Activated T-helper 1 cell treated with anti-CD3 and anti-CD28 coated beads, Interleukin-12 subunit alpha, Interleukin-12 subunit beta, Interleukin-2, Interleukin-4 antibody, amounts not matched to agents 30 ng/mL and 10 ng/mL and 1 ng/mL, durations not matched to agents 14 hours and 24 hours and 36 hours (primary cell): ENCODE measurements at regions of chr5 and their contacts with region 1.

Region 1: DNA sequence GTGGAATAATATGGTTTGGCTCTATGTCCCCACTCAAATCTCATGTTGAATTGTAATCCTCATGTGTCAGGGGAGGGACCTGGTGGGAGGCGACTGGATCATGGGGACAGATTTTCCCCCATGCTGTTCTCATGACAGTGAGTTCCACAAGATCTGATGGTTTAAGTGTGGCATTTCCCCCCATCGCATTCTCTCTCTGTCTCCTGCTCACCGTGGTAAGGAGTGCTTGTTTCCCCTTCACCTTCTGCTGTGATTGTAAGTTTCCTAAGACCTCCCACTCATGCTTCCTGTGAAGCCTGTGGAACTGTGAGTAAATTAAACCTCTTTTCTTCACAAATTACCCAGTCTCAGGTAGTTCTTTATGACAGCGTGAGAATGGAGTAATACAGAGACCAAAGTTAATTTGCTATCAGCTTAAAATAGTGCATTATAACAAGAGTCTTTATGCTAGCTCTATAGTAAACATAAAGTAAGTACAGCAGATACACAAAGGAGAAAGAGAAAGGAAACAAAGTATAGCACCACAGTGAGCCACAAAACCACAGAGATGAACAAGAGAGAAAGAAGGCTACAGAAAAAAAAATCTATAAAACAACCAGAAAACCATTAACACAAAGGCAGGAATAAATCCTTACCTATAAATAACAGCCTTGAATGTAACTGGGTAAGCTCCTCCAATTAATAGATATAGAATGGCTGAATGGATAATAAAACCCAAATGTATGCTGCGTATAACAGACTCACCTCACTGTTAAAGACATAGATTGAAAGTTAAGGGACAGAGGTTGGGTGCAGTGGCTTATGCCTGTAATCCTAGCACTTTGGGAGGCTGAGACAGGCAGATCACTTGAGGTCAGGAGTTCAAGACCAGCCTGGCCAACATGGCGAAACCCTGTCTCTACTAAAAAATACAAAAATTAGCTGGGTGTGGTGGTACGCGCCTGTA is 39.7 kb downstream of the RAPGEF6 start:
- DNase-seq: peak; percentile 19
- H3K4me3 Mint-ChIP-seq: peak overlapping the region; percentile 61
- H3K27ac Mint-ChIP-seq: peak overlapping the region; percentile 82
- H3K4me1 Mint-ChIP-seq: peaks cover 39% of the 10 kb centered on the region
- H3K27me3 Mint-ChIP-seq: no peaks in the 10 kb centered on the region

Region 2: GRCh38 chr5:131563434-131564228 is 31.7 kb before region 1 on chr5:
- intact Hi-C with region 1: no loop called
- DNase-seq: no peak
- H3K4me3 Mint-ChIP-seq: no peak overlapping the region
- H3K27ac Mint-ChIP-seq: no peak overlapping the region
- H3K4me1 Mint-ChIP-seq: peaks cover 34% of the 10 kb centered on the region
- H3K27me3 Mint-ChIP-seq: no peaks in the 10 kb centered on the region

Region 3: GRCh38 chr5:131854134-131854533 is 258.8 kb after region 1 on chr5:
- intact Hi-C with region 1: loop called (anchors 1 kb)
- DNase-seq: peak; percentile 6
- H3K4me3 Mint-ChIP-seq: peak overlapping the region; percentile 24
- H3K27ac Mint-ChIP-seq: peak overlapping the region; percentile 10
- H3K4me1 Mint-ChIP-seq: peaks cover 28% of the 10 kb centered on the region
- H3K27me3 Mint-ChIP-seq: peaks cover 5% of the 10 kb centered on the region

Region 4: DNA sequence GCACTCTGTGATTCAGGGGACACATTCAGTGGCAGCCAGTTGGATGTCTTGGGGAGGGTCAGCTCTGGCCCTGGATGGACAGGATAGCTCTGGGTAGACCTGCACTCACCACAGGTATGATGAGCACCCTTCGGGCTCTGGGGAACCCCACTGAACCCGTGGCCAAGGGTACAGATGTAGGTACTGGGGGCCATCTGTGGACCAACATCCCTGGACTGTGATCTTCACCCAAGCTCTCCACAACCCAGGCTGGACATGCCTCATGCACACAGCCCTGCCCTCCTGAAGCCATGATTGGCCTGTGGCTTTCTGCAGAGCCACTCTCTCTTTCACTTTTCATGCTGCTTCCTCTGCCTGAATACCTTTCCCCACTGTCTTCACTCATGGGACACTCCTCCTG is 431.7 kb after region 1 on chr5:
- intact Hi-C with region 1: no loop called
- DNase-seq: no peak
- H3K4me3 Mint-ChIP-seq: peak overlapping the region; percentile 5
- H3K27ac Mint-ChIP-seq: peak overlapping the region; percentile 73
- H3K4me1 Mint-ChIP-seq: no peaks in the 10 kb centered on the region
- H3K27me3 Mint-ChIP-seq: peaks cover 19% of the 10 kb centered on the region